Activated CD4-positive, alpha-beta T cell treated with anti-CD3 and anti-CD28 coated beads for 36 hours (primary cell): ENCODE measurements at regions of chr2 and their contacts with region 1.

Region 1: DNA sequence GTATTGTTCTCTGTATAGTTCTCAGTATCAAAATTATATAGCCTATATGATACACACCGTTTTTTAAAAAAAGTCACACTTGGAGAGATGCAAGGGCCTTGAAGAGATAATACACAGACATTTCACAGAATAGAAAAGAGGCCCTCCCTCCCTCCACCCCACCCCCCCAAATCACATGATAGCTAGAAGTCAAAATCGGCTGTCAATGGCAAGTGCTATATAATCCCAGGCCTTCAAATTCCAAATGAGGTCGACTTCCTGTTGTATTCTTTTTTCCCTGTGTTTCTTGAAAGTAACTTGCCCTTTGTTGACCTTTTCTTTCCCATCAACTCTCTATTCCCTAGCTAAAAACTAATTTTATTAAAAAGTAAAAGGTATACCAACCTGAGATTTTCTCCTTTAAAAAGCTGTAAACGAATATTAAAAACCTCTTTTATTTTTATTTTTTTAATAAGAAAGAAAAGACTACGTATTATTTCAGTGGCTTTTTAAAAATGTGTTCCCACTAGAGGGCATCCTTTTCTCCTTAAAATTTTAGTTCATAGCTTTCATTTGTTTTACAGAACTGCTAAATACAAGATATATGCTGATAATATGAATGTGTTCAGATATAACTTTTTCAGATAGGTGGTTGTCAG is 46.6 kb downstream of the KCMF1 start:
- DNase-seq: no peak
- ATAC-seq: peak; percentile 2
- H3K4me3 Mint-ChIP-seq: no peak overlapping the region
- H3K27ac Mint-ChIP-seq: peak overlapping the region; percentile 61
- H3K4me1 Mint-ChIP-seq: peaks cover 76% of the 10 kb centered on the region
- H3K27me3 Mint-ChIP-seq: no peaks in the 10 kb centered on the region

Region 2: DNA sequence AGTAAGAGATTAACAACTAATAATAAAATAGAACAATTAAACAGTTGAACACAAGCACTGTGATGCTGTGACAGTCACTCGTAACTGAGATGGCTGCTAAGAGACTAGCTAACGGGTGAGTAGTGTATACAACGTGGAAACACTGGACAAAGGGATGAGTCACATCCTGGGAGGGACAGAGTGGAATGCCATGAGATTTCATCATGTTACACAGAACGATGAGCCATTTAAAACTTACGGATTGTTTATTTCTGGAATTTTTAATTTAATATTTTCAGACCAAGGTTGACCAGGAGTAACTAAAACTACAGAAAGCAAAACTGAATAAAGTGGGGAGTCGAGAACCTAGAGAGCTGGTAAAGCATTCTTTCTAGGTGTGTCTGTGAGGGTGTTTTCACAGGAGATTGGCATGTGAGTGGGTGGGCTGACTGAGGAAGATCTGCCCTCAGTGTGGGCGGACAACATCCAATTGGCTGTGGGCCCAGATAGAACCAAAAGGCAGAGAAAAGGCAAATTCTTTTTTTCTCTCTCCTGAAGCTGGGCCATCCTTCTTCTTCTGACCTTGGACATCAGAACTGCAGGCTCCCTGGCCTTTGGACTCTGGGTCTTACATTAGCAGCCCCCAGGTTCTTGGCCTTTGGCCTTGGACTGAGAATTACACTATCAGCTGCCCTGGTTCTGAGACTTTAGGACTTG is 97.5 kb before region 1 on chr2:
- CTCF ChIA-PET with region 1: interaction called, 66 read pairs
- POLR2A ChIA-PET with region 1: interaction called, 6 read pairs
- intact Hi-C with region 1: no loop called
- DNase-seq: peak; percentile 81
- ATAC-seq: peak; percentile 81
- H3K4me3 Mint-ChIP-seq: peak overlapping the region; percentile 36
- H3K27ac Mint-ChIP-seq: peak overlapping the region; percentile 83
- H3K4me1 Mint-ChIP-seq: peaks cover 41% of the 10 kb centered on the region
- H3K27me3 Mint-ChIP-seq: no peaks in the 10 kb centered on the region

Region 3: GRCh38 chr2:84970868-84971509 is 46.5 kb before region 1 on chr2 and contains the start of gene KCMF1:
- CTCF ChIA-PET with region 1: interaction called, 12 read pairs
- POLR2A ChIA-PET with region 1: interaction called, 11 read pairs
- intact Hi-C with region 1: loop called (anchors 1 kb)
- DNase-seq: peak; percentile 83
- ATAC-seq: peak; percentile 69
- H3K4me3 Mint-ChIP-seq: peak within 1 kb of the TSS; percentile 98
- H3K27ac Mint-ChIP-seq: peak within 1 kb of the TSS; percentile 100
- H3K4me1 Mint-ChIP-seq: peaks cover 38% of the 10 kb centered on the region
- H3K27me3 Mint-ChIP-seq: no peaks in the 10 kb centered on the region
- total RNA-seq, gene KCMF1: 78.1 to 98.5 TPM

Region 4: GRCh38 chr2:84999553-84999955 is 18.0 kb before region 1 on chr2:
- CTCF ChIA-PET with region 1: interaction called, 20 read pairs
- POLR2A ChIA-PET with region 1: interaction called, 7 read pairs
- intact Hi-C with region 1: no loop called
- DNase-seq: no peak
- ATAC-seq: peak; percentile 31
- H3K4me3 Mint-ChIP-seq: peak overlapping the region; percentile 45
- H3K27ac Mint-ChIP-seq: peak overlapping the region; percentile 96
- H3K4me1 Mint-ChIP-seq: peaks cover 80% of the 10 kb centered on the region
- H3K27me3 Mint-ChIP-seq: no peaks in the 10 kb centered on the region

Region 5: DNA sequence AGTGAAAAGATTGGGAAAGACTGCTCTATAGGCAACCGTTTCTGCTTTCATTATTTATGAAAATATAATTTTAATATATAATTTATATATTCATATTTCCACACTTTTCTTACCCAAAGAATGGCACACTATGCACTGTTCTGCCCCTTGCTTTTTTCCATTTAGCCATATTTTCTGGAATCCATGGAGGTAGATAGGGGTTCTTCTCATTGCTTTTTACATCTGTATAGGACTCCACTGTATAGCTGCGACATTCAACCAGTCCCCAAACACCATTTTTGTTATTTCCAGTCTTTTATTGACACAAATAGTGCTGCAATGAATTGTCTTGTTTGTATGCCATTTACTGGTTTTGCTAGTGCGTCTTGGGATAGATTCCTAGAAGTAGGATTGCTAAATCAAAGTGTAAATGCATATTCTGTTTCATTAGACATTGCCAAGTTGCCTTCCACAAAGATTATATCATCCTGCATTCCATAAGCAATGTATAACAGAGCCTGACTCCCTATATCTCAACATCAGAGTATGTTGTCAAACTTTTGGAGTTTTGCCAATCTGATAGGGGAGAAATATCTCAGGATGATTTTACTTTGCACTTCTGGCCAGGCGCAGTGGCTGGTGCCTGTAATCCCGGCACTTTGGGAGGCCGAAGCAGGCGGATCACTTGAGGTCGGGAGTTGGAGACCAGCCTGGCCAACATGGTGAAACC is 89.1 kb after region 1 on chr2:
- CTCF ChIA-PET with region 1: no interaction called
- POLR2A ChIA-PET with region 1: interaction called, 11 read pairs
- intact Hi-C with region 1: no loop called
- DNase-seq: no peak
- ATAC-seq: no peak
- H3K4me3 Mint-ChIP-seq: no peak overlapping the region
- H3K27ac Mint-ChIP-seq: no peak overlapping the region
- H3K4me1 Mint-ChIP-seq: no peaks in the 10 kb centered on the region
- H3K27me3 Mint-ChIP-seq: peaks cover 7% of the 10 kb centered on the region